ENCODE measurements at regions of chr9 and their contacts with region 1.

Region 1: DNA sequence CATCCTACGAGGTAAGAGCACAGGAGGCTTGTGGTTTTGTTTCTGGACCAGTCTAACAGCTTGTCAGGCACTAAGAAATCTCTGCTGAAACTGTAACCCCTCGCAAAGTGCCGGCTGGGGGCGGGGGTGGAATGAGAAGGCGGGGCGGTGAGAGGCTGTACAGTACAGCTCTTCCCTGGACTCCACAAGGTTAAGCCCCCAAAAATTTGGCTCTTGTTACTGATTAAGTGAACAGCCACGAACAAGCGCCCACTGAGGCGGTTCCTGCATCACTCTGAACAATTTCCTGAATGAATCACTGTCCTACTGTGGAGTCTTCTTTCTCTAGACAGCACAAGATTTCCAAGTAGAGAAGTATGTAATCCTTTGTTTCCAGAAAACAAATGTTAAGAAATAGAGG is 6.8 kb downstream of the FBP2 start:
- DNase-seq: no peak

Region 2: GRCh38 chr9:94576131-94576530 is 10.7 kb before region 1 on chr9:
- CTCF ChIA-PET with region 1: no interaction called
- POLR2A ChIA-PET with region 1: no interaction called
- DNase-seq: no peak

Region 3: DNA sequence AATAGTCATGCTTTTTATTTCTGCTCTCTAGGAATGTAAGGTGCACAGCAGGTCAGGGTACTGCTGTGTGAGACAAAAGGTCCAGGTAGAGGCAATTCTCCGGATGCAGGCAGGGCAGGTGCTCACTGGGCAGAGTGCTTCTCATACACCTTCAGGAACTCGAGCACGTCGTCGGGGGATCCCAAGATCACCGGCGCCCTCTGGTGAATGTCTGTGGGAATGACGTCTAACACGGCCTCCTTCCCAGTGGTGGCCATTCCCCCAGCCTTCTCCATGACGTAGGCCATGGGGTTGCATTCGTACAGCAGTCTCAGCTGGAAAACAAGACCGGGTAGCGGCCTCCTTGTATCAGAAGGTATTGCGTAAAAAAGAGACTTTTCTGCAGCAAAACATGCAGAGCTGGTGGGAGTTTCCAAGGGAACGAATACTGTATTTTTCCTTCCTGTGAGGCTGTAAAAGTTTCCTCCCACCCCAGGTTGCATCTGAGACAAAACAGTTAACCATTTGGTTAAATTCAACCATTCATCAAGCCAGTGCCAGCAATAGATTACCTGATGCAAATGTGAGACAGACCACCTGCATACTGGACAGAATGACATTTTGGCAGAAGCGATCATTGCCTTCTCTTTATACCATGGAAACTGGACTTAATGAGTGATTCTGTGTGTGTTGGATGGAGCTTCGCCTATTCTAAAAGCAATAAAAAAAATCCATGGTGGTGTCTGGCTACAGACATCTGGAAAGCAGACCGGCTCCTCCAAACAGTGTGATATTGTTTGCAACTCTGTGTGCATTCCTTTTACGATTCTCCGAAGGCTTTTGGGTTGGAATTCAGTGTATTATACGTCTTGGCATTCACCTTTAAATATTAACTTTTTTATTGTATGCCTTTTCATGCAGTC is 16.7 kb after region 1 on chr9:
- CTCF ChIA-PET with region 1: interaction called, 10 read pairs
- POLR2A ChIA-PET with region 1: no interaction called
- DNase-seq: peak; percentile 73